Transverse colon (tissue), 4 donors: ENCODE measurements at regions of chr4 and their contacts with region 1.

Region 1: DNA sequence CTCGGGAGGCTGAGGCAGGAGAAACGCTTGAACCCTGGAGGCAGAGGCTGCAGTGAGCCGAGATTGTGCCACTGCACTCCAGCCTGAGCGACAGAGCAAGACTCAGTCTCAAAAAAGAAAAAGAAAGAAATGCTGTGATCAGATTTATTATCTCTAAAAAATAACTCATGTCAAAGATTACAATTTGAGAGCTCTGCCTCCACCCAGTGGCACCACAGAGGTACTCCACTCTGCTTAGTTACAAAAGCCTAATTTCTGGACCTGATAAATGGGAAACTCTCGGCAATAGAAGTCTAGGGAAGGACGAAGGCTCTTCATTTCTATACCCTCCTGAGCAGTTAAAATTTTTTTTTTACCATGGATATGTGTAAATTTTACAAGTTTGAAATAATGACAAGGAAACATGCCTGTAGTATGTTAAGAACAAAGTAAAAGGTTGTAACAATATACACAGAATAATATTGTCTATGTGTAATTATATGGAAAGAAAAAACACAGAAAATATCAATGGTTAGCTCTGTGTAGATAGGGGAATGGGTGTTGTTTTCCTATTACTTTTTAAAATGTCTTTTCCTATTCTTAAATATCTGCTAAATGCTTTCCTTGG is 149.8 kb downstream of the STIM2 start:
- DNase-seq: peak; percentile 63
- H3K4me3 ChIP-seq: no peak overlapping the region
- H3K27ac ChIP-seq: peak overlapping the region in 2 of 4 donors; percentile 30 to 38
- H3K4me1 ChIP-seq: peaks cover 0 to 39% (median 0%) of the 10 kb centered on the region in 4 donors
- H3K27me3 ChIP-seq: no peaks in the 10 kb centered on the region
- CTCF ChIP-seq: peak; percentile 87 to 93 (median 92)
- EP300 ChIP-seq: no peak
- POLR2A ChIP-seq: no peak

Region 2: DNA sequence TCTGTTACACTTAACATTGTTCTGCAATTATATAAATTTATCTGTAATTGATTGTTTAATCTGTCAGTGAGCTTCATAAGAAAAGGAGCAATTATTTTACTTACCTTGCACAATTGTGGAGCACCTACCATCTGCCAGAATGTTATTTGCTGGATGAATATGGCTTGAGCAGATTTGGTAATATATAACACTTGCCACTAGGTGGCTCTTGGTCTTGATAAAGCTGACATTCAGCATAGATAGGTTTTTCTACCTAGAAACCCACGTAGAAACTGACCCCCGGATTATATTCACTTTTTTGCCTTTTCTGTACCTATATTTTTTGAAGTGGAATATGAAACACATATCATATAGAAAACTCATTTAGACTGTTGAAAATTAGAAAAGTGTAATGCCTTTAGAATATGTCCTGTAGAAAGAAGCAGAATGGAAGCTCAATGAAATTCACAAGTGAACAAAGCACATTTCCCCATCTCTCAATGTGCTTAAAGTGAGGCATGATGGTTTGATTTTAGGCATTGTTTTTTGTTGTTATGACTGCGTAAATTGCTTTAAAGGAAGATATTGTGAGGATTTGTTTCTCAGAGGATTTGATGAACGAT is 680.1 kb before region 1 on chr4:
- in situ Hi-C with region 1: loop called in 1 of 4 experiments (anchors 25 kb)
- intact Hi-C with region 1: no loop called
- DNase-seq: no peak
- H3K4me3 ChIP-seq: no peak overlapping the region
- H3K27ac ChIP-seq: no peak overlapping the region
- H3K4me1 ChIP-seq: peaks cover 4 to 48% (median 17%) of the 10 kb centered on the region in 4 donors
- H3K27me3 ChIP-seq: no peaks in the 10 kb centered on the region
- CTCF ChIP-seq: peak; percentile 64 to 76 (median 72)
- EP300 ChIP-seq: no peak
- POLR2A ChIP-seq: no peak

Region 3: GRCh38 chr4:26459054-26459755 is 551.2 kb before region 1 on chr4:
- in situ Hi-C with region 1: loop called (anchors 25 kb)
- intact Hi-C with region 1: no loop called
- DNase-seq: no peak
- H3K4me3 ChIP-seq: peak overlapping the region in 1 of 4 donors; percentile 22
- H3K27ac ChIP-seq: peak overlapping the region in 3 of 4 donors; percentile 23 to 71 (median 67)
- H3K4me1 ChIP-seq: peaks cover 0 to 4% (median 0%) of the 10 kb centered on the region in 4 donors
- H3K27me3 ChIP-seq: no peaks in the 10 kb centered on the region
- CTCF ChIP-seq: peak; percentile 42 to 53 (median 51)
- EP300 ChIP-seq: no peak
- POLR2A ChIP-seq: no peak

Region 4: DNA sequence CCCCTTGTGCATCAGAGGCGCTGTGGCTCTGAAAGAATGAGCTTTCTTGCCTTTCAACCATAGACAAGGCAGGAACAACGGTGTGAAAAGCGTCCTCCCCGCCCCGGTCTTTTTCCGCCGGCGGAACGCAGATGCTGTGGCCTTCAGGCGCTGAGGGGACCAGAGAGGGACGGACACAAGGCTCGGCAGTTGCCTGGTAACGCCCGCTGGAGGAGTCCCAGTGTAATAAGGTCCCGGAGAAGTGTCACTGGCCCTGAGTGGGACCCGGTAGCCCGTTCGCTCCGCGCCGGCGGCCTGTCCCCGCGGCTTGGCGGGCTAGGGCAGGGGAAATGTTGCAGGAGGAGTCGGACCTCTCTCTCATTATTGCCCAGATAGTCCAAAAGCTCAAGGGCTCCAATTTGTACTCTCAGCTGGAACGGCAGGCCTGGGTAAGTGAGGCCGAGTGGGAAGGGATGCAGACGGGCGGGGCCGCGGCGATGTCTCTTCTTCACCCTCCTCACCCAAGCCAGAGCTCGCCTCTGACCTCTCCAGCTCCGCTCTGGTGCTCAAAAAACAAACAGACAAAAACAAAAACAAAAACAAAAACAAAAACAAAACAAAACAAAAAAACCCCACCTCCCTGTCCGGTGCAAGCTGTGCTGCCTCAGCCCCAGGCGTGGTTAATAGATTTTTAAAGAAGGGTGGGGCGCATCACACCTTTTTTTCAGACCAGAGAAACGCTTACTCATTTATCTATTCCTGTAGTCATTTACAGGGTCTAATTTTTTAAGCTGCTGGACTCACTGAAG is 426.4 kb before region 1 on chr4 and contains the start of gene TBC1D19:
- in situ Hi-C with region 1: loop called in 1 of 4 experiments (anchors 25 kb)
- intact Hi-C with region 1: no loop called
- DNase-seq: peak; percentile 90
- H3K4me3 ChIP-seq: peak within 1 kb of the TSS; percentile 46 to 89 (median 58)
- H3K27ac ChIP-seq: peak within 1 kb of the TSS; percentile 75 to 81 (median 80)
- H3K4me1 ChIP-seq: peaks cover 0 to 20% (median 7%) of the 10 kb centered on the region in 4 donors
- H3K27me3 ChIP-seq: no peaks in the 10 kb centered on the region
- CTCF ChIP-seq: peak in 1 of 5 experiments; percentile 8
- EP300 ChIP-seq: no peak
- POLR2A ChIP-seq: peak; percentile 23
- total RNA-seq, gene TBC1D19: 6.3 to 19.1 (median 9.6) TPM

Region 5: GRCh38 chr4:26753617-26754016 is 256.8 kb before region 1 on chr4:
- in situ Hi-C with region 1: loop called in 1 of 4 experiments (anchors 25 kb)
- intact Hi-C with region 1: no loop called
- DNase-seq: no peak
- H3K4me3 ChIP-seq: no peak overlapping the region
- H3K27ac ChIP-seq: no peak overlapping the region
- H3K4me1 ChIP-seq: peaks cover 0 to 4% (median 0%) of the 10 kb centered on the region in 4 donors
- H3K27me3 ChIP-seq: no peaks in the 10 kb centered on the region
- CTCF ChIP-seq: no peak
- EP300 ChIP-seq: no peak
- POLR2A ChIP-seq: no peak

Region 6: DNA sequence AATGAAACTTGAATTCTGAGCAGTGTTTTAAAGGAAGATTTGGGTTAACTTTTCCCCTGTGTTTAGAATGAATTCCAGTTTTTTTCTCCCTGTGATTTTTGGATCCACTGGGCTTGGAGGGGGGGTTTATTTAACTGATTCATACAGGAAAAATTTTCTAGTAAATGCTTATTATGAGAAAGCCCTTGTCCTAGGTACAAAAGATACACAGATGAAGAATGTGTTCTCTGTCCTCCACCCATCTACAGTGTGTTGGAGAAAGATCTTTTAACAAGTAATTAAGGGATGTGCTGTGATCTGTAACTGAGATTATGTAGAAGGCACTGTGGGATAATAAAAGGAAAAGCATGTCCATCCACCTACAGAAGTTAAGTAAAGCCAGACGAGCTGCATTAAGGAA is 45.9 kb before region 1 on chr4:
- in situ Hi-C with region 1: no loop called
- intact Hi-C with region 1: no loop called
- DNase-seq: no peak
- H3K4me3 ChIP-seq: no peak overlapping the region
- H3K27ac ChIP-seq: no peak overlapping the region
- H3K4me1 ChIP-seq: peaks cover 0 to 10% (median 2%) of the 10 kb centered on the region in 4 donors
- H3K27me3 ChIP-seq: no peaks in the 10 kb centered on the region
- CTCF ChIP-seq: no peak
- EP300 ChIP-seq: no peak
- POLR2A ChIP-seq: no peak

Region 7: DNA sequence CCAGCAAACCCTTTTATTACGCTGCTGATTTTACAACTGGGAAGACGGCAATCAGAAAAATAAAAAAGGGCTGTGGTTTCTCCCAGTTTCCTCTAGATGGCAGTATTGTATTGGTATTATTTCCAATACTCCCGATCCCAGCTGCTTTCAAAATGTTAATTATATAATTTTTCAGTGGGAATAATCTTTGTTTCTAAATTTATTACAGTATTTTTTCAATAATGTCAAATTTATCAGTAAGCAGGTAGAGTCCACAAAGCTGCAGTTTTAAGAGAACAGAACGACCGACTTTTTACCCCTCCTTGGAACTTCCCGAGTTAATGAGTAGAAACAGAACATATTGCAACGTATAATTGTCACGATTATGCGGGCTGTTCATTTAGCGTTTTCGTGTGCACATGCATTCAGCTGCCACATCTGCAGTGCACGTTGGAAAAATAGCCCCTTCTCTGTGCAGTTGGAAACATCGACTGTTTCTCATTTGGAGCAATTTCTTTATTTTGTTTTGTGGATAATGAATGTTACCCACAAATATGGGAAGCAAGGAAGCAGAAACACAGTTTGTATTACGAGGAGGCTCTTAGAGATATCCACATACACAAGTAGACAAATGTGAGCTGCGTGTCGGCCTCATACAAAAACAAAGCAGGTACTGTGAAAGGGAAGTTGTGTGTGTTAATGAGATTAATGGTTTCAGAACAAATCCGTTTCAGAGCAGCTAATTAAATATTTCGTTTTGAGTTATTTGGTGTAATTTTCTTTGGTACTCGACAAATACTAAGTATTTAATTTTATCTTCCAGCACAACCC is 38.2 kb after region 1 on chr4:
- in situ Hi-C with region 1: no loop called
- intact Hi-C with region 1: no loop called
- DNase-seq: no peak
- H3K4me3 ChIP-seq: peak overlapping the region in 3 of 4 donors; percentile 10 to 45 (median 12)
- H3K27ac ChIP-seq: no peak overlapping the region
- H3K4me1 ChIP-seq: peaks cover 0 to 9% (median 2%) of the 10 kb centered on the region in 4 donors
- H3K27me3 ChIP-seq: peaks cover 16% of the 10 kb centered on the region
- CTCF ChIP-seq: peak; percentile 79 to 90 (median 80)
- EP300 ChIP-seq: no peak
- POLR2A ChIP-seq: no peak

Region 8: GRCh38 chr4:27066601-27067000 is 56.2 kb after region 1 on chr4:
- in situ Hi-C with region 1: no loop called
- intact Hi-C with region 1: no loop called
- DNase-seq: peak; percentile 26
- H3K4me3 ChIP-seq: no peak overlapping the region
- H3K27ac ChIP-seq: no peak overlapping the region
- H3K4me1 ChIP-seq: no peaks in the 10 kb centered on the region
- H3K27me3 ChIP-seq: peaks cover under 1% of the 10 kb centered on the region
- CTCF ChIP-seq: no peak
- EP300 ChIP-seq: no peak
- POLR2A ChIP-seq: no peak